ENCODE measurements at regions of chr17 and their contacts with region 1.

Region 1: DNA sequence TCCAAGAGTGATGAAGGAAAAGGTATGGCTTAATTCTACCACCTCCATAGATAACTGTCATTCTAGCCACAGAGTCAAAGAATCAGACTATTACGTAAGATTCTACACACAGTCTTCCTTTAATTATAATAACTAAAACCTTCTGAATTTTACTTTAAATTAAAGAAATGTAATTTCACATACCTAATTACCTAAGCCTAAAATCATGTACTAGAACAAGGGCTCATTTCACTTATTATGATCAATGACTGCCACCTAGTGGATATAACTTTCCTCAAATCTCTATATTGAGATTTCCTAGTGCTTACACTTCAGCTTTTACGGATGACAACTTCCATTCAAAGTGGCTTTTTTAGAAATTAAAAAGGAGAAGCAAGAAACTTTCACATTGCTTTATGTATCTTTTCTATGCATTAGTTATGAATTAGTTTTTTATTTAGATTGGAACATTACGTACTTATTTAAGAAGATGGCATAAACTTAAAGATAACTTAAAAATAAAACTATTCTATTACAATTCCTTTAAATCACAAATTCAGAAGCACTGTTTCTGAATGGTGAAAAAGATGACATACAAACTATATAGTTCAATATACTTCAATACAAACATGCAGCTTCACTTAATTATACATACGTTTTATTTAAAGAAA is 18.2 kb upstream of the ABCA10 start:
- DNase-seq: peak; percentile 60
- ATAC-seq: no peak
- H3K4me3 ChIP-seq: no peak overlapping the region
- H3K4me3 Mint-ChIP-seq: no peak overlapping the region
- H3K27ac ChIP-seq: no peak overlapping the region
- H3K27ac Mint-ChIP-seq: no peak overlapping the region
- H3K4me1 ChIP-seq: no peaks in the 10 kb centered on the region
- H3K4me1 Mint-ChIP-seq: no peaks in the 10 kb centered on the region
- H3K27me3 ChIP-seq: no peaks in the 10 kb centered on the region
- H3K27me3 Mint-ChIP-seq: no peaks in the 10 kb centered on the region
- CTCF ChIP-seq: peak; percentile 91

Region 2: DNA sequence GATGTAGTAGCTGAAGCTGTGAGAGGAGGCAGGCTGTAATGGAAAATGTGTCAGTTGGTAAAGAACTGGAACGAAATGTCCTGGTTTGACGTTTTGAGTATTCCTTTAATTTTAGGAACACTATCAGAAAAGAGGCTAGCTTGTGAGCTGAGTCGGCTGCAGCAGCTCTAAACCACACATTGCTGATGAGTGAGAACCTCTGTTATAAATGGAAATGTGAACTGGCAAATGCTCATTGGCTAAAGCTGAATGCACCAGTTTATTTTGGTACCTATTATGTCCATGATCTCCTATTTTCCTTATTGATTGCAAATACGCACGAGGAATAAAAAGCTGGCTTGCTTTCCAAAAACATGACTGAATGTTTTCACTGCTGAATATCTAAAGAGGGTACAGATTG is 778.5 kb before region 1 on chr17:
- CTCF ChIA-PET with region 1: interaction called, 3 read pairs
- POLR2A ChIA-PET with region 1: no interaction called
- intact Hi-C with region 1: loop called (anchors 5 kb)
- DNase-seq: no peak
- ATAC-seq: no peak
- H3K4me3 ChIP-seq: no peak overlapping the region
- H3K4me3 Mint-ChIP-seq: no peak overlapping the region
- H3K27ac ChIP-seq: no peak overlapping the region
- H3K27ac Mint-ChIP-seq: no peak overlapping the region
- H3K4me1 ChIP-seq: peaks cover 0 to 2% of the 10 kb centered on the region in 2 donors
- H3K4me1 Mint-ChIP-seq: peaks cover 2% of the 10 kb centered on the region
- H3K27me3 ChIP-seq: no peaks in the 10 kb centered on the region
- H3K27me3 Mint-ChIP-seq: peaks cover 9% of the 10 kb centered on the region
- CTCF ChIP-seq: no peak

Region 3: DNA sequence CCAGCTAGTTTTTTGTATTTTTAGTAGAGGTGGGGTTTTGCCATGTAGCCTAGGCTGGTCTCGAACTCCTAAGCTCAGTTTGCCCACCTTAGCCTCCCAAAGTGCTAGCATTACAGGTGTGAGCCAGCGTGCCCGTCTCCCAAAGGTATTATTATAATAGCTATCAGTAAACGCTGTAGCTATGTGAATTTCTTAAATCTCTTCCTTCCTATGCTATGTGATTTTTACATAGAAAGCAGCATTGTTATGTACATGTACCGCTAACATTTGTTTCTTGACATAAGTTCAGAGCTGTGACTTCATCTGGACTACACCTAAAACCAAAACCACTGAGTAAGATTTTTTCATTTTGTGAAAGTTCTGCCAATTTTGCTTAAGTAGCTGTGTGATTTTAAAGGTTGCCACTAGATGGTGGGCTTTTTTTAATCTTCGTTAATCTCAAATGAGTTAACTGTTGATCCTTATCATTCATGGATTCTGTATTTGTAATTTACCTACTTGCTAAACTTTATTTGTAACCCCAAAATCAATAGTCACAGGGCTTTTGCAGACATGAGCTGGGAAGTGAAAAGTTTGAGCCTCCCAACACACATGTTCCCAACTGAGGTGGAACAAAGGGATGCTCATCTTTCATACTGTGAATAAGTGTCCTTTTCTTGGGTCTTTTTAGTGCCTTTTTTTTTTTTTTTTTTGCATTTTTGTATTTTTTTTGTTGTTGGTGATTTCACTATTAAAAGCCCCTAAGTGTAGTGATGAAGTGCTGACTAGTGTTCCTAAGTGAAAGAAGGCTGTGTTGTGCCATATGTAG is 712.8 kb before region 1 on chr17:
- CTCF ChIA-PET with region 1: no interaction called
- POLR2A ChIA-PET with region 1: no interaction called
- intact Hi-C with region 1: loop called (anchors 5 kb)
- DNase-seq: no peak
- ATAC-seq: no peak
- H3K4me3 ChIP-seq: no peak overlapping the region
- H3K4me3 Mint-ChIP-seq: no peak overlapping the region
- H3K27ac ChIP-seq: no peak overlapping the region
- H3K27ac Mint-ChIP-seq: no peak overlapping the region
- H3K4me1 ChIP-seq: no peaks in the 10 kb centered on the region
- H3K4me1 Mint-ChIP-seq: peaks cover 1% of the 10 kb centered on the region
- H3K27me3 ChIP-seq: no peaks in the 10 kb centered on the region
- H3K27me3 Mint-ChIP-seq: no peaks in the 10 kb centered on the region
- CTCF ChIP-seq: peak; percentile 37

Region 4: GRCh38 chr17:68777243-68777855 is 469.5 kb before region 1 on chr17:
- CTCF ChIA-PET with region 1: interaction called, 95 read pairs
- POLR2A ChIA-PET with region 1: no interaction called
- intact Hi-C with region 1: loop called (anchors 1 kb)
- DNase-seq: peak; percentile 60
- ATAC-seq: no peak
- H3K4me3 ChIP-seq: no peak overlapping the region
- H3K4me3 Mint-ChIP-seq: no peak overlapping the region
- H3K27ac ChIP-seq: no peak overlapping the region
- H3K27ac Mint-ChIP-seq: no peak overlapping the region
- H3K4me1 ChIP-seq: no peaks in the 10 kb centered on the region
- H3K4me1 Mint-ChIP-seq: peaks cover 14% of the 10 kb centered on the region
- H3K27me3 ChIP-seq: no peaks in the 10 kb centered on the region
- H3K27me3 Mint-ChIP-seq: no peaks in the 10 kb centered on the region
- CTCF ChIP-seq: peak; percentile 74

Region 5: GRCh38 chr17:69078864-69079263 is 168.0 kb before region 1 on chr17:
- CTCF ChIA-PET with region 1: no interaction called
- POLR2A ChIA-PET with region 1: no interaction called
- intact Hi-C with region 1: no loop called
- DNase-seq: no peak
- ATAC-seq: no peak
- H3K4me3 ChIP-seq: no peak overlapping the region
- H3K4me3 Mint-ChIP-seq: no peak overlapping the region
- H3K27ac ChIP-seq: no peak overlapping the region
- H3K27ac Mint-ChIP-seq: no peak overlapping the region
- H3K4me1 ChIP-seq: no peaks in the 10 kb centered on the region
- H3K4me1 Mint-ChIP-seq: no peaks in the 10 kb centered on the region
- H3K27me3 ChIP-seq: no peaks in the 10 kb centered on the region
- H3K27me3 Mint-ChIP-seq: no peaks in the 10 kb centered on the region
- CTCF ChIP-seq: no peak

Region 6: DNA sequence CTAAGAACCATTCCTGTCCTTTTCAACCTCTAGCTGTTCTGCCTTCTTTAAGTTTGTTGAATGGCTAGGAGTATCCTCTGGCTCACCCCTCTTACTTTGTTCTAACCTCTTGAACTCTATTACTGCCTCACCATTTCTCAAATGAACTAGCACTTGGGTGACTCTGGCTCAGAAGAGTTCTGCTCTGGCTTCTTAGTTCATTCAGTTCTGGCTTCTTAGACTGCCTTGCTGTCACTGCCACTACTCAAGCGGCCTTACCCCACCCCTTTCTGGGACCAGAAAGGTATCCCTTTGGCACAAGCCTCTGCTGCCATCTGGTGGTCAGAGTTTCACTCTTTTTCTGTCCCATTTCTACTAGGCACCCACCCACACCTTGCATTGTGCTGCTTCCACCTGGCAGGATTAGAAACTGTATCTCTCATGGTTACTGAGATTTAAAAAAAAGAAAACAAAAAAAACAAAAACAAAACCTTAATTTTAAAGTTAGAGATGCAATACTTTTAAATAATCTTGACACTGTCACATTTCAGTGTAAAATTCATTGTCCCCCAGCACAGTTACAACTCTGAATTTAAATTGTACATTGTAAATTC is 11.4 kb before region 1 on chr17:
- CTCF ChIA-PET with region 1: interaction called, 16 read pairs
- POLR2A ChIA-PET with region 1: no interaction called
- intact Hi-C with region 1: no loop called
- DNase-seq: peak; percentile 81
- ATAC-seq: peak; percentile 87
- H3K4me3 ChIP-seq: no peak overlapping the region
- H3K4me3 Mint-ChIP-seq: no peak overlapping the region
- H3K27ac ChIP-seq: no peak overlapping the region
- H3K27ac Mint-ChIP-seq: no peak overlapping the region
- H3K4me1 ChIP-seq: peaks cover 0 to 4% of the 10 kb centered on the region in 2 donors
- H3K4me1 Mint-ChIP-seq: peaks cover 4% of the 10 kb centered on the region
- H3K27me3 ChIP-seq: no peaks in the 10 kb centered on the region
- H3K27me3 Mint-ChIP-seq: no peaks in the 10 kb centered on the region
- CTCF ChIP-seq: peak; percentile 89

Region 7: DNA sequence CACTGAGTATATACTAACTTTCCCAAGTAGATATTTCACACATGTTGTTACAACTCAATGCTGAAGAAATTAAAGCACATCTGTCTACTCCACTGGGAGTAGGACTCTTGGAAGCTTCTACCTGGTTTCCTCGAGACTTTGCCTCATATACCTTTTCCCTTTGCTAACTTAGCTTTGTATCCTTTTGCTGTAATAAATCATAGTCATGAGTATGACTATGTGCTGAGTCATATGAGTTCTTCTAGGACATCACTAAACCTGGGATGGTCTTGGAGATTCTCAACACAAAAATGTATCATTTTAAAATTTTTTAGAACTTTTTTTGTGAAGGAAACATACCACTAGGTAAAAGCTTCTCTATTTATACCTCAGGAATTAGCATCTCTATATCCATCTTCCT is 40.3 kb after region 1 on chr17:
- CTCF ChIA-PET with region 1: no interaction called
- POLR2A ChIA-PET with region 1: no interaction called
- intact Hi-C with region 1: no loop called
- DNase-seq: no peak
- ATAC-seq: no peak
- H3K4me3 ChIP-seq: no peak overlapping the region
- H3K4me3 Mint-ChIP-seq: no peak overlapping the region
- H3K27ac ChIP-seq: no peak overlapping the region
- H3K27ac Mint-ChIP-seq: no peak overlapping the region
- H3K4me1 ChIP-seq: no peaks in the 10 kb centered on the region
- H3K4me1 Mint-ChIP-seq: no peaks in the 10 kb centered on the region
- H3K27me3 ChIP-seq: no peaks in the 10 kb centered on the region
- H3K27me3 Mint-ChIP-seq: no peaks in the 10 kb centered on the region
- CTCF ChIP-seq: no peak

Region 8: GRCh38 chr17:69592692-69593350 is 346.0 kb after region 1 on chr17:
- CTCF ChIA-PET with region 1: no interaction called
- POLR2A ChIA-PET with region 1: no interaction called
- intact Hi-C with region 1: no loop called
- DNase-seq: no peak
- ATAC-seq: no peak
- H3K4me3 ChIP-seq: no peak overlapping the region
- H3K4me3 Mint-ChIP-seq: no peak overlapping the region
- H3K27ac ChIP-seq: no peak overlapping the region
- H3K27ac Mint-ChIP-seq: no peak overlapping the region
- H3K4me1 ChIP-seq: no peaks in the 10 kb centered on the region
- H3K4me1 Mint-ChIP-seq: no peaks in the 10 kb centered on the region
- H3K27me3 ChIP-seq: no peaks in the 10 kb centered on the region
- H3K27me3 Mint-ChIP-seq: no peaks in the 10 kb centered on the region
- CTCF ChIP-seq: peak; percentile 35

Measured in B cell (primary cell).